Stomach (tissue), 19 donors: ENCODE measurements at regions of chr3 and their contacts with region 1.

Region 1: GRCh38 chr3:66407611-66408218 is 93.1 kb downstream of the LRIG1 start:
- DNase-seq: peak; percentile 75 to 87
- H3K4me3 ChIP-seq: no peak overlapping the region
- H3K27ac ChIP-seq: peak overlapping the region in 4 of 5 donors; percentile 3 to 83 (median 60)
- H3K4me1 ChIP-seq: peaks cover 53 to 99% (median 71%) of the 10 kb centered on the region in 4 donors
- H3K27me3 ChIP-seq: no peaks in the 10 kb centered on the region
- CTCF ChIP-seq: peak in 5 of 7 experiments; percentile 80 to 90 (median 88)
- EP300 ChIP-seq: no peak
- POLR2A ChIP-seq: no peak

Region 2: DNA sequence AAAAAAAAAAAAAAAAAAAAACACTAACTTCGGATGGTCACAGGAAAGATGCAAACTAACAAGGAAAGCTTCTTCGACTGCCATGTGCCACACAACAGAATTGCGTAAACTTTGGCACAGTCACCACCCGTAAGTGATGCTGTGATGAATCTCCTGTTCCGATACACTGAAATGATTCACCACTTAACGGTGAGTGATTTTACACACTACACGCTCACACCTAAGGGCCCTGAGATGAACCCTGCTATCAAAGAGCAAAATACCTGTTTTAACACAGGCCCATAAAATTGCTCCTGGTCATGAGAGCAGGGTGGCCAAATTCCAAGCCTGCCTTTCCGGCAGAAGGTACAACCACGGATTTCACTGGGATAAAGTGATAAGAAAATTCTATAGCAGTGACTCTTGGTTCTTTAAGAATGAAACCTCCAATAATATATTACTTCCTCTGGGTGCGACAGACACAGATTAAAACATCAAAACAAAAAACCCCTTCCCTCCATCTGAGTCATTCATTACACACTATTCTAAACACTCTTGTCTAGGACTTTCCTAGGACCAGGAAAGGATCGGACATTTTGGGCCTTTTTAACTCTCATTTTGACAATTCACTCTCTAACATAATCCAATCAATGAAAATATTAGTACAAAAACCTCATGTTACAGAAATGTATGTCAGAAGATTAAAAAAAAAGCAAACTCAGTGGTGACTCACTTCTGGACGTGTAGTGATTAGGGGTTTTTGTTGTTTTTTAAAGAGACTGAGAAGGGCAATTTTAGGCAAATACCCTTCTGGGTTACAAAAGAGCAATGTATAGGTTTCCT is 64.8 kb after region 1 on chr3:
- intact Hi-C with region 1: no loop called
- DNase-seq: no peak
- H3K4me3 ChIP-seq: peak overlapping the region in 2 of 4 donors; percentile 0 to 3
- H3K27ac ChIP-seq: peak overlapping the region in 4 of 5 donors; percentile 26 to 96 (median 82)
- H3K4me1 ChIP-seq: peaks cover 67 to 100% (median 86%) of the 10 kb centered on the region in 4 donors
- H3K27me3 ChIP-seq: no peaks in the 10 kb centered on the region
- CTCF ChIP-seq: no peak
- EP300 ChIP-seq: no peak
- POLR2A ChIP-seq: no peak

Region 3: GRCh38 chr3:66500576-66501482 is 93.1 kb after region 1 on chr3 and contains the start of gene LRIG1:
- intact Hi-C with region 1: loop called (anchors 10 kb)
- DNase-seq: peak; percentile 100
- H3K4me3 ChIP-seq: peak within 1 kb of the TSS; percentile 76 to 98 (median 94)
- H3K27ac ChIP-seq: peak within 1 kb of the TSS; percentile 90 to 97 (median 94)
- H3K4me1 ChIP-seq: peaks cover 23 to 50% (median 46%) of the 10 kb centered on the region in 4 donors
- H3K27me3 ChIP-seq: no peaks in the 10 kb centered on the region
- CTCF ChIP-seq: peak in 3 of 7 experiments; percentile 5 to 60 (median 37)
- EP300 ChIP-seq: no peak
- POLR2A ChIP-seq: no peak
- total RNA-seq, gene LRIG1: 85.8 to 278 (median 101) TPM

Region 4: GRCh38 chr3:66816090-66816761 is 408.5 kb after region 1 on chr3:
- intact Hi-C with region 1: loop called (anchors 5 kb)
- DNase-seq: peak in 1 of 2 donors; percentile 78
- H3K4me3 ChIP-seq: no peak overlapping the region
- H3K27ac ChIP-seq: no peak overlapping the region
- H3K4me1 ChIP-seq: peaks cover 0 to 47% (median 20%) of the 10 kb centered on the region in 4 donors
- H3K27me3 ChIP-seq: no peaks in the 10 kb centered on the region
- CTCF ChIP-seq: peak in 5 of 7 experiments; percentile 12 to 62 (median 58)
- EP300 ChIP-seq: no peak
- POLR2A ChIP-seq: no peak